ENCODE measurements at regions of chr22 and their contacts with region 1.

Region 1: GRCh38 chr22:46798366-46799350 is 36.2 kb downstream of the TBC1D22A start:
- DNase-seq: peak; percentile 82
- ATAC-seq: peak; percentile 87
- H3K4me3 Mint-ChIP-seq: no peak overlapping the region
- H3K27ac Mint-ChIP-seq: peak overlapping the region; percentile 69
- H3K4me1 Mint-ChIP-seq: peaks cover 29% of the 10 kb centered on the region
- H3K27me3 Mint-ChIP-seq: no peaks in the 10 kb centered on the region

Region 2: DNA sequence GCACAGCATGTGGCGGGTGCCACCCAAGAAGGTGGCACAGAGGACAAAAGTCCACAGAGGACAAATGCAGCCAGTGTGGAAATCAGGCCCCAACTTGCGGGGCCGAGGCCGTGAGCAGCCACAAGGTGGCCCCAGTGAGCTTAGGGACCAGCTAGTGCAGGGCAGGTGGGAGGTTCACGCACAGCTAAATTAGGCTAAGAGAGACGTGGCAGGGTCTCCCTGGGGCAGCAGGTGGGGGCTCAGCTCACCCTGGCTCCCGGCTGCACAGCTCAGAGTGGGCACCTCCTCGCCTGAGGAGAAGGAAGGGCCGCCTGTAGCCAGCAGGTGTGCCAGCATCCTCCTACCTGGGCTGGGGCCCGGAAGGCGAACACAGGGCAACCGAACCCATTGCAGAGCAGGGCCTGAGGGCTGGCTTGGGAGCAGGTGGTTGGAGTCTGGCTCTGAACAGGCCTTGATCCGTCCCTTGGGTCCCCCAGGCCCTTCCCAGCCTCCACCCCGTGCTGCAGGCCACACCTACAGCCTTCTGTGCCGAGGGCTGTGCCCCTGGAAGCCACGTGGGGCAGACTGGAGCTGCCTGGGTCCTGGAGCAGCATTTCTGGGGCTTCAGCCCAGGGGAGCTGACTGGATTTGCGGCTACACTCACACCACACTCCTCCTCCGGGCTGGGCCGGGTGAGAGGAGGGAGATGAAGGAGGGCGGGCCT is 235.1 kb before region 1 on chr22:
- CTCF ChIA-PET with region 1: interaction called, 19 read pairs
- POLR2A ChIA-PET with region 1: no interaction called
- DNase-seq: peak; percentile 83
- ATAC-seq: peak; percentile 91
- H3K4me3 Mint-ChIP-seq: no peak overlapping the region
- H3K27ac Mint-ChIP-seq: peak overlapping the region; percentile 61
- H3K4me1 Mint-ChIP-seq: peaks cover 22% of the 10 kb centered on the region
- H3K27me3 Mint-ChIP-seq: peaks cover 4% of the 10 kb centered on the region

Region 3: DNA sequence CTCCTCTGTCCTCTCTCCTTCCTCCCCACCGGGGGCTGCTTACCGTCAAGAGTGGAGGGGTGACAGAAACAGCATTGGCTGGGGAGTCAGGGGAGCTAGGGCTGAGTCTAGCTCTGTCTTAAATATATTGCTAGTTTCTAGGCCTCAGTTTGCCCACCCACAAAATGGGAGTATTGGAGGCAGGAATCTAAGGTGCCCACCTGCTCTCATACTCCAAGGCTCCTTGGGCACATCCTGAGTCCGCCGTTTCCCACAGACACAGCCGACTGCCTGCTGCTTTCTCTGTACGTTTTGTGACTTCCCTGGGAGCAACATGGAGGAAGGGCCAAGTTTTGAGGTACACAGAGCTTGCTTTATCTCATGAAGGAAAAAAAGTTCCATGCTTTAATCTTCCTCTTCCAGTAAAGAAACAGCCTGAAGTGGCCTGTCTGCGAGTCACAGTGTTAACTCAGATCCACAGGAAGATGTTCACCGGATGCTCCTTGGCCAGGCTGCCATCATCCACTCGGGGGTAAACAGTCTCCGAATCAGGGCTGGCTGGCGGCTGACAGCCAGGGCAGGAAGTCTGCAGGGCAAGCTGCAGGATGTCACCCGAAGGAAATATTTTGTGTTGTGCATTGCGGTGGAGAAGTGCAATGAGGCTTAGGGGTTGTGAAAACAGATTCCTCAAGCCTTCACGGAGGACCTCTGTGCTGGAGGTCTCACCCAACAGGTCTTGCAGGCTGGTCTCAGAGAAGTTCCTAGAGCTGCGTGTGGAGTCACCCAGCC is 49.6 kb before region 1 on chr22:
- CTCF ChIA-PET with region 1: interaction called, 17 read pairs
- POLR2A ChIA-PET with region 1: interaction called, 3 read pairs
- DNase-seq: peak; percentile 81
- ATAC-seq: peak; percentile 93
- H3K4me3 Mint-ChIP-seq: peak overlapping the region; percentile 73
- H3K27ac Mint-ChIP-seq: peak overlapping the region; percentile 98
- H3K4me1 Mint-ChIP-seq: peaks cover 24% of the 10 kb centered on the region
- H3K27me3 Mint-ChIP-seq: peaks cover 2% of the 10 kb centered on the region

Region 4: DNA sequence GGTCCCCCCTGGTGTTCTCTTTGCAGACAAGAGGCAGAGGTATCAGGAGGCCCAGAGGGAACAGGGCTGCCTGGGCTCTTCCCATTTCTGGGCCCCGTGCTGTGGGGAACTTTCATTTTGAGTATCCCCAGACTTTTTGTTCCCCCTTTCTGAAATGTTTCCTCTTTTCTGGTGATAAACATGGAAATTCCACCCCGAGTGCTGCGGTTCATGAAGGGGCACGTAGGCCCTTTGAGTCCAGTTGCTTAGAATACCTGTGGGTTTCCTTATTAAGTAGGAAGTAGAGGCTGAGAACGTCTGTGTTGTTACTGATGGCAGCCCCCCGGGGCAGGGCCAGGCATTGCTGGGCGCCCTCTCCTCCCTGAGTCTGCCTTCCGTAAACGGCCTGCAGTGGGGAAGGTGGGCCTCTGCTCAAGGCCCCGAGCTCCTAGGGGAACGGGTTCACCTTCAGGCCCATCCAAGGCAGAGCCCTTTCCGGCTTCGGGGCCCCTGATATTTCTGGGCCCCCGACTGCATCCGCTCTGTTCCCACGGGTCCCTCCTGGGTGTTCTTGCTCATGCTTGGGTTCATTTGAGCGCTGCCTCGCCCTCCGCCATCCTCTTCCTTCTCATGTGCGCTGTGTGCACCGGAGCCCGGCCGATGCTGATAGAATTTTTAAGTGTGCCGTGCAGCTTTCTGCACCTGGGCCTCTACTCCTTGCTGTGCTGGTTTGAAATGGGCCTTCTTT is 24.2 kb before region 1 on chr22:
- CTCF ChIA-PET with region 1: interaction called, 10 read pairs
- POLR2A ChIA-PET with region 1: no interaction called
- DNase-seq: no peak
- ATAC-seq: peak; percentile 47
- H3K4me3 Mint-ChIP-seq: peak overlapping the region; percentile 59
- H3K27ac Mint-ChIP-seq: peak overlapping the region; percentile 81
- H3K4me1 Mint-ChIP-seq: peaks cover 63% of the 10 kb centered on the region
- H3K27me3 Mint-ChIP-seq: no peaks in the 10 kb centered on the region

Region 5: GRCh38 chr22:46815896-46816731 is 17.5 kb after region 1 on chr22:
- CTCF ChIA-PET with region 1: interaction called, 20 read pairs
- POLR2A ChIA-PET with region 1: interaction called, 3 read pairs
- DNase-seq: no peak
- ATAC-seq: no peak
- H3K4me3 Mint-ChIP-seq: no peak overlapping the region
- H3K27ac Mint-ChIP-seq: no peak overlapping the region
- H3K4me1 Mint-ChIP-seq: peaks cover 17% of the 10 kb centered on the region
- H3K27me3 Mint-ChIP-seq: no peaks in the 10 kb centered on the region

Region 6: DNA sequence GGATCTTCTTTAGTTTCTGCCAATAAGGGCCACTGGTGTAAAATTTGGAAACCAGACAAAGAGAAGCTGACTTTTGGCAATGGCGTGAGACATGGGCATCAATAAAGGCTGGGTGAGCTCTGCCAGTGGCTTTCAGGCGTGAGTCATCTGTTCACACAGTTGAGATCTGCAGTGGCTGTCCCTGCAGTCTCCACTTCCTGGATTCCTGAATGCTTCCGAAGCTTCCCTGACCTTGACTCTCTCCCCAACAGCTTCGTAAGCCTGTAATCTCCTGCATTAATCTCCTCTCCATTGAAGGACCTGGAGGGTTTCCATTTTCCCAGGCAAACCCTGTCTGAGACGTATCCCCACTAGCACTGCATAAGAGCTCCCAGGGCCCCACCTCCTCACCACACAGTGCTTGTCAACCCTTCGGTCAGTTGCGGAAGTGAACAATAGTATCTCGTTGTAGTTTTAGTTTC is 538.5 kb after region 1 on chr22:
- CTCF ChIA-PET with region 1: no interaction called
- POLR2A ChIA-PET with region 1: no interaction called
- DNase-seq: peak; percentile 35
- ATAC-seq: no peak
- H3K4me3 Mint-ChIP-seq: peak overlapping the region; percentile 4
- H3K27ac Mint-ChIP-seq: peak overlapping the region; percentile 36
- H3K4me1 Mint-ChIP-seq: no peaks in the 10 kb centered on the region
- H3K27me3 Mint-ChIP-seq: no peaks in the 10 kb centered on the region

Measured in activated CD8-positive, alpha-beta T cell treated with anti-CD3 and anti-CD28 coated beads, Interleukin-2, amount 10 ng/mL, durations not matched to agents 7 days and 5 days (primary cell).